WTC11 (cell line): ENCODE measurements at regions of chr5 and their contacts with region 1.

Region 1: DNA sequence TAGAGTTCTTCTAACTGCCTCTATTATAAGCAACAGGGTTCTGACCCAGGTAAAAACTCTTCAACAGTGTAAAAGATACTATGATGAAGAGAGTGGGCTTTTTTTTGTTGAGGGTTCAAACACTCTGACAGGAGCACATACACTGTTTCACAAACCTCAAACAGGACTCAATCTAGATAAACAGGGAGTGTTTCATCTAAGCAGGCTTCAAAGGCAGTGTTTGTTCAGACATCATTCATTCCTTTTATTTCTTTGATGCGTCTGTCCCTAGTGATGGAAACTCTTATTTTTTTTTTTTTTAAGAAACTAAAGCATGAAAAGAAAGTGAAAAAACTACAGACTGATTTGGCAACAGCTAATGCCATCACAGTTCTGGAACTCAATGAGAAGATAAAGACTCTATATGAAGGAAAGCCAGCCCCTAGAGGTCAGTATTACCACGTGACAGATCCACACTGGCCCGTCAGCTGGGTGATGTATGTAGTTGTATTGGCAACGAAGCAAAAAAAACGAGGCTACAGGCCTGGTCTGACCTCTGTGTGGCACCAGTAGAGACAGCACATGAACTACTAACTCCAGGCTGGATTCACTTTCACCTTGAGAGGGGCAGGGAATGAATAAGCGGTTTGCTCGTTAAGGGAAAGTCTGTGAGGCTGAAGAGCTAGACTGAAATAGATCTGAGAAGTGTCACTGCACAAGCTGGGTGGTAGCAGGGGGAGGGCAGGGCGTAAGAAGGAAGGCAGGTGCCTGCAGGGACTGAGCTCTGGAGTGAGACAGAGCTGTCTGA is 172.2 kb downstream of the CCDC192 start:
- DNase-seq: peak; percentile 37
- ATAC-seq: peak; percentile 92
- H3K4me3 Mint-ChIP-seq: no peak overlapping the region
- H3K27ac Mint-ChIP-seq: no peak overlapping the region
- H3K4me1 Mint-ChIP-seq: peaks cover 5% of the 10 kb centered on the region; the same call in 1 of the 2 replicates
- H3K27me3 Mint-ChIP-seq: no peaks in the 10 kb centered on the region
- CTCF ChIP-seq: no peak

Region 2: DNA sequence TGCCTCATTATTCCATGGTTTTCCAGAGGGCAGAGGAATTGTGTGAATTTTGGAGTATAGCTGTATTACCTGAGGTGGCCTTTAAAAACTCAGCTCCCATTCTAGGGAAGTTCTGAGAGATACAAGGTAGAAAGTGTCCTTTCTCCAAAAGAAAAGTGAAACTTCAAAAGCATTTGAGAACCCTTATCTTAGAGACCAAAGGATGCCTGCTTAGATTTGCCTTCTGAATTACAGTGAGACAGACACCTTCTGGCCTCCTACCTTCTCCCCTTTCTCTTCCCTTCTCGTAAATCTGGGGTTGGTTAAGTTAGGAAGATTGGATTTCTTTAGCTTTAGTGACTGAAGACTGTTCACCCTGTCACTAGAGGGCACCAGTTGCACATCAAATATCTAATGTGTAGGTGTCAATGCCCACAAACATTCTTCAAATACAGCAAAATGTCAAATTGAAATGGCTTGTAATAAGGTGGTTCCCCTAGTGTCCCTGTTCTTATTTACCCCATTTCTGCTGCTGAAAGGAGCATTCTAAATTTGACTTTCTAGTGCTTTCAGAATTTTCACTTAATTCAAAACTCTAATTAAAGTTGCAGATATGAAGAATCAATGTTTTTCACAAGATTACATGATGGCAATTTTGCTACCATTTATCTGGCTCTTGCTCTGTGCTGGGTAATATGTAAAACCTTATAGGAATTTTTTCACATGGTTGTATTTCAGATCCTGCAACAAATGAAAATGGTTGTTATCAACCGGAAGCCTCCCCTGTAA is 311.2 kb before region 1 on chr5:
- CTCF ChIA-PET with region 1: interaction called, 13 read pairs
- POLR2A ChIA-PET with region 1: no interaction called
- DNase-seq: peak; percentile 35
- ATAC-seq: peak; percentile 79
- H3K4me3 Mint-ChIP-seq: no peak overlapping the region
- H3K27ac Mint-ChIP-seq: no peak overlapping the region
- H3K4me1 Mint-ChIP-seq: peaks cover 9% of the 10 kb centered on the region
- H3K27me3 Mint-ChIP-seq: peaks cover 3% of the 10 kb centered on the region
- CTCF ChIP-seq: peak; percentile 54; the same call in 1 of the 2 replicates

Region 3: GRCh38 chr5:127801751-127802476 is 73.5 kb before region 1 on chr5:
- CTCF ChIA-PET with region 1: no interaction called
- POLR2A ChIA-PET with region 1: no interaction called
- DNase-seq: no peak
- ATAC-seq: no peak; the same call in 1 of the 2 replicates
- H3K4me3 Mint-ChIP-seq: no peak overlapping the region
- H3K27ac Mint-ChIP-seq: no peak overlapping the region
- H3K4me1 Mint-ChIP-seq: no peaks in the 10 kb centered on the region
- H3K27me3 Mint-ChIP-seq: no peaks in the 10 kb centered on the region
- CTCF ChIP-seq: no peak

Region 4: DNA sequence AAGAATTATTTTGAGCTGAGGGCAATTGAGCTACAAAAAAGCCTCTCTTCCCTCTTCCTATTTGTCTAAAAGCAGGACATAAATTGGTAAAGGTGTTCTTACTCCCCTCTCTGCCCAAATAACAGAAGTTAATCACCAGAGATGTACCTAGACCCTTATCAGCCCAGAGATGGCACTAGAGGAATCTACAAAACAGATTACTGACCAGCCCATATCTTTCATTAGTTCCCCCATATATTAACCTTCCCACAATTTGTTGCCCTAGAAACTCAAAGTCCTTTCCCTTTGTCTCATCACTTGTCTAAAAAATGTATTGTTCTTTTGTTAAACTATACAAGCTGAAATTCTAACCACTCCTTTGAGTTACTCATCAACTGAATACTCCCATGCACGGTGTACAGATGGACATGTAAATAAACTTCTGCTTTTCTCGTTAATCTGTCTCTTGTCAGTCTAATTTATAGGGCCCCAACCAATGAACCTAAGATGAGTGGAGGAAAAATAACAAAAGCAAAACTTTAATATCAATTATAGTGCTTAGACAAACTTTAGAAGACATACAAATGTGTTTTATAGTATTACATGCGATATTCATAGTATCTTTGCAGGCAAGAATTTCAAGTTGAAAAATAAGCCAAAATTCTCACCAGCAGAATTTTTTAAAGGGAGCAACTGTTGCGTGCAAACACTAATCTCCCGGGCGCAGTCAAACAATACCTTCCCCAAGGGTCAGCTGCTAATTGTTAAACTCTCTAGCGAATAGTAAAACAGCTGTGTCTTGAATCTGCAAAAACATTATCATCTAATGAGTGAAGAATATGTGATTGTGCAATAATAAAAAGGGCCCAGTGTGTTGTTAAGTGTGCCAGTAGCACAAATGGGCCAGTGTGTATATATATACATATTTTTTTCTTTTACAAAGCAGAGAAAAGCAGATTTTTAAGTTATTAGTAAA is 41.2 kb before region 1 on chr5:
- CTCF ChIA-PET with region 1: no interaction called
- POLR2A ChIA-PET with region 1: no interaction called
- DNase-seq: no peak
- ATAC-seq: no peak
- H3K4me3 Mint-ChIP-seq: no peak overlapping the region
- H3K27ac Mint-ChIP-seq: no peak overlapping the region
- H3K4me1 Mint-ChIP-seq: peaks cover 5% of the 10 kb centered on the region
- H3K27me3 Mint-ChIP-seq: no peaks in the 10 kb centered on the region
- CTCF ChIP-seq: no peak